Activated CD8-positive, alpha-beta T cell treated with anti-CD3 and anti-CD28 coated beads for 36 hours (primary cell): ENCODE measurements at regions of chr14 and their contacts with region 1.

Region 1: DNA sequence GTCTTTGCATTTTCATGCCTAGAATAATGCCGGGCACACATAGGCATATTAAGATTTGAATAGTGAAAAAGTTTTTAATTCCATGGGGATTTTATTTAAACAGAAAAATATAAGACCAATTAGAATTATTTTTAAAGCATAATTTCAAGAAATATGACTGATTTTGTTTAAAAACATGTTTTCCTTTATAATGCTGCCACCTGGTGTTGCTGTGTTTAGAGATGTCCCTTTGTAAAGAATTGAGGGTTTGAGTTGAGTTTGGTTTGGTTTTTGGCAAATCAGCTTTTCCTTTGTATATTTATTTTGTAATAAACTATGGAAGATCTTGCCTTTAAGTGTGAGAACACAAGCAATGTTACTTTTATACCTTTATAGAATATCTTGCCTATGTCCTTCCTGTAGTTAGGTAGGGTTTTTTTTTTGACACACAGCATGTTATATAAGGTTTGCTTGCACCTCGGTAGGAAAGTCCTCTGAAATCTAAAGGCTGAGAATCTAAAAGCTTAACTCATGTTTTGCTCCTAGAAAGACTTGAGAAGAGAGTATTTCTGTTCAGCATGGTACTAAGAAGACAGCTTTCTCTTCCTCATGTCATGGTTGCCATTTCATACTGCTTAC is 31.4 kb upstream of the SNAPC1 start:
- DNase-seq: no peak
- ATAC-seq: no peak
- H3K4me3 Mint-ChIP-seq: no peak overlapping the region
- H3K27ac Mint-ChIP-seq: peak overlapping the region; percentile 60
- H3K4me1 Mint-ChIP-seq: peaks cover 49% of the 10 kb centered on the region
- H3K27me3 Mint-ChIP-seq: no peaks in the 10 kb centered on the region
- CTCF ChIP-seq: peak; percentile 49

Region 2: GRCh38 chr14:61662437-61663311 is 68.2 kb before region 1 on chr14:
- CTCF ChIA-PET with region 1: no interaction called
- POLR2A ChIA-PET with region 1: no interaction called
- intact Hi-C with region 1: no loop called
- DNase-seq: peak; percentile 81
- ATAC-seq: peak; percentile 85
- H3K4me3 Mint-ChIP-seq: peak overlapping the region; percentile 51
- H3K27ac Mint-ChIP-seq: peak overlapping the region; percentile 97
- H3K4me1 Mint-ChIP-seq: peaks cover 61% of the 10 kb centered on the region
- H3K27me3 Mint-ChIP-seq: no peaks in the 10 kb centered on the region
- CTCF ChIP-seq: no peak

Region 3: GRCh38 chr14:61719344-61720293 is 11.2 kb before region 1 on chr14:
- CTCF ChIA-PET with region 1: interaction called, 10 read pairs
- POLR2A ChIA-PET with region 1: interaction called, 3 read pairs
- intact Hi-C with region 1: no loop called
- DNase-seq: no peak
- ATAC-seq: peak; percentile 72
- H3K4me3 Mint-ChIP-seq: peak overlapping the region; percentile 48
- H3K27ac Mint-ChIP-seq: peak overlapping the region; percentile 77
- H3K4me1 Mint-ChIP-seq: peaks cover 78% of the 10 kb centered on the region
- H3K27me3 Mint-ChIP-seq: no peaks in the 10 kb centered on the region
- CTCF ChIP-seq: no peak

Region 4: GRCh38 chr14:61744239-61744638 is 13.4 kb after region 1 on chr14:
- CTCF ChIA-PET with region 1: interaction called, 13 read pairs
- POLR2A ChIA-PET with region 1: interaction called, 4 read pairs
- intact Hi-C with region 1: no loop called
- DNase-seq: no peak
- ATAC-seq: no peak
- H3K4me3 Mint-ChIP-seq: no peak overlapping the region
- H3K27ac Mint-ChIP-seq: no peak overlapping the region
- H3K4me1 Mint-ChIP-seq: peaks cover 15% of the 10 kb centered on the region
- H3K27me3 Mint-ChIP-seq: no peaks in the 10 kb centered on the region
- CTCF ChIP-seq: no peak